CD8-positive, alpha-beta T cell (primary cell): ENCODE measurements at regions of chr3 and their contacts with region 1.

Region 1: GRCh38 chr3:180959691-180960090 is 29.8 kb downstream of the DNAJC19 start:
- DNase-seq: no peak
- ATAC-seq: no peak
- H3K4me3 ChIP-seq: no peak overlapping the region
- H3K4me3 Mint-ChIP-seq: no peak overlapping the region
- H3K27ac ChIP-seq: no peak overlapping the region
- H3K27ac Mint-ChIP-seq: peak overlapping the region; percentile 22
- H3K4me1 ChIP-seq: no peaks in the 10 kb centered on the region
- H3K4me1 Mint-ChIP-seq: no peaks in the 10 kb centered on the region
- H3K27me3 ChIP-seq: no peaks in the 10 kb centered on the region
- H3K27me3 Mint-ChIP-seq: no peaks in the 10 kb centered on the region
- CTCF ChIP-seq: no peak

Region 2: GRCh38 chr3:180923561-180923960 is 36.1 kb before region 1 on chr3:
- CTCF ChIA-PET with region 1: no interaction called
- POLR2A ChIA-PET with region 1: no interaction called
- intact Hi-C with region 1: loop called in 1 of 2 experiments (anchors 5 kb)
- DNase-seq: no peak
- ATAC-seq: no peak
- H3K4me3 ChIP-seq: no peak overlapping the region
- H3K4me3 Mint-ChIP-seq: no peak overlapping the region
- H3K27ac ChIP-seq: no peak overlapping the region
- H3K27ac Mint-ChIP-seq: no peak overlapping the region
- H3K4me1 ChIP-seq: peaks cover 42% of the 10 kb centered on the region
- H3K4me1 Mint-ChIP-seq: peaks cover 86% of the 10 kb centered on the region
- H3K27me3 ChIP-seq: no peaks in the 10 kb centered on the region
- H3K27me3 Mint-ChIP-seq: no peaks in the 10 kb centered on the region
- CTCF ChIP-seq: no peak

Region 3: GRCh38 chr3:180973543-180973942 is 13.9 kb after region 1 on chr3:
- CTCF ChIA-PET with region 1: no interaction called
- POLR2A ChIA-PET with region 1: no interaction called
- intact Hi-C with region 1: loop called in 1 of 2 experiments (anchors 2 kb)
- DNase-seq: no peak
- ATAC-seq: no peak
- H3K4me3 ChIP-seq: no peak overlapping the region
- H3K4me3 Mint-ChIP-seq: no peak overlapping the region
- H3K27ac ChIP-seq: no peak overlapping the region
- H3K27ac Mint-ChIP-seq: no peak overlapping the region
- H3K4me1 ChIP-seq: no peaks in the 10 kb centered on the region
- H3K4me1 Mint-ChIP-seq: no peaks in the 10 kb centered on the region
- H3K27me3 ChIP-seq: no peaks in the 10 kb centered on the region
- H3K27me3 Mint-ChIP-seq: no peaks in the 10 kb centered on the region
- CTCF ChIP-seq: no peak